Head of caudate nucleus (tissue), 42 donors: ENCODE measurements at regions of chr15 and their contacts with region 1.

Region 1: DNA sequence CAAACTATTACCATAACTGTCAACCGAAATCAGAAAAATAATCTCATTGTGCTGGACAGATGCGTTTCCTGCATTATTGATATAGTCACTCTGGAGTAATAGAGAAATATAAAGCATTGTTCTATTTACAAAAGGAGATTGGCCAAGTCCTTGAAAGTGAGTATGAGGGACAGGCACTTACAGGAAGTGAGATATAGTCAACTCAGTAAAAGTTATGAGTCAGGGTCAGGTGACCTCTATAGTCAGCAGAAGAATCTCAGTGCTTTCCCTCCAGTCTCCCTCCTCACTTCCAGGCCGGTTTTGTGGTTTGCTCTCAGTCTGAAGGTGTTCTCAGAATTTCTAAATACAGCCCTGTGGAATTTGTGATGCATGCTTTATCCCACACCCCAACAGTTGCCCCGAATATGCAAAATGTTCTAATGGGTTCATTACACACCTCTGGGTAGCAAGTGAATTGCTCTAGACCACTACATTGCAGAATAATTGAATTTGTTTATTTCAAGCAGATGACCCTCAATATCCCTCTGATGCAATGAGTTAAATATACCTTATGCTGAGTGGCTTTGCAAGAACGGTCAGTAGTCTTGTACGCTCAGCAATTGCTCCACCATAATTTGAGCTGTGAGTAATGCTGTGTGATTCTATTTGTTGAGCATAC is 787.7 kb downstream of the MCTP2 start:
- DNase-seq: no peak

Region 2: GRCh38 chr15:94951538-94951937 is 67.5 kb before region 1 on chr15:
- intact Hi-C with region 1: loop called (anchors 10 kb)
- DNase-seq: no peak

Region 3: DNA sequence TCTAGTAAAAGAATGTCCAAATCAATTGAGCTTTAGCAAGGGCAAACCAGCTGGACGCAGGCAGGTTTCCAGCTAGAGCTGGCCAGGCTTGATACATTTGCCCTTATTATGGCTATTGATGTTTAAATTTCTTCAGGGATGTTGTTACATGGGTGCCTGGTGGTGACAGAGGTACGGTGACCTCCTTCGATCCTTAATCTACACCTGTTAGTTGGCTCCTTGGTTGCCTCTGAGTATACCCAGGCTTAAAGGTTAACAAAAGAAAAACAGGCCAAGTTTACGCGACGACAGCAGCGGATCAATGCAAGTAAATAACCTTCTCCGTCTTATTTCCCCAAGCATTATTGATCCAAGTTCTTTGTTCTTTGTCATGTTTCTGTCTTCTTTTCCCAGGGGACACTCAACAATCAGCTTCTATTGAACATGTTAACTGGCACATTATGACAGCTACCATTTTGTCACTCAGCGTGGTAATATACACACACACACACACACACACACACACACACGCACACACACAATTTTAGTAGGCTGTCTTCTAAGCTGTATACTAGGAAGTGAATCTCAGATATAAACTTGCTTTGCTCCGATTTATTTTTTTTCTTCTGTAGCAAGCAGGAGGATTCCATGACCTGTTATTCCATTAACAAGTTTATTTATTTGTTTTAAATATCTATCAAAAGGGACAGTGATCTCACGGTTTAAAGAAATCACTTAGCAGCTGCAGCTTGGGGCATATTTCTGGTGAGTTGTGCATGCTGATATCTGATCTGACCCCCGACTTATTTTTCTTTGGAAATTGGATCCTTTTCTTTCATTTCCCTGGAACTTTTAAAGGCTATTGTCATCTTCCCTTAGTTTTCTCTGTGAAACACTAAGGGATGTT is 57.0 kb after region 1 on chr15:
- intact Hi-C with region 1: no loop called
- DNase-seq: no peak

Region 4: GRCh38 chr15:95086531-95087252 is 67.7 kb after region 1 on chr15:
- intact Hi-C with region 1: no loop called
- DNase-seq: no peak